ENCODE measurements at regions of chr6 and their contacts with region 1.

Region 1: DNA sequence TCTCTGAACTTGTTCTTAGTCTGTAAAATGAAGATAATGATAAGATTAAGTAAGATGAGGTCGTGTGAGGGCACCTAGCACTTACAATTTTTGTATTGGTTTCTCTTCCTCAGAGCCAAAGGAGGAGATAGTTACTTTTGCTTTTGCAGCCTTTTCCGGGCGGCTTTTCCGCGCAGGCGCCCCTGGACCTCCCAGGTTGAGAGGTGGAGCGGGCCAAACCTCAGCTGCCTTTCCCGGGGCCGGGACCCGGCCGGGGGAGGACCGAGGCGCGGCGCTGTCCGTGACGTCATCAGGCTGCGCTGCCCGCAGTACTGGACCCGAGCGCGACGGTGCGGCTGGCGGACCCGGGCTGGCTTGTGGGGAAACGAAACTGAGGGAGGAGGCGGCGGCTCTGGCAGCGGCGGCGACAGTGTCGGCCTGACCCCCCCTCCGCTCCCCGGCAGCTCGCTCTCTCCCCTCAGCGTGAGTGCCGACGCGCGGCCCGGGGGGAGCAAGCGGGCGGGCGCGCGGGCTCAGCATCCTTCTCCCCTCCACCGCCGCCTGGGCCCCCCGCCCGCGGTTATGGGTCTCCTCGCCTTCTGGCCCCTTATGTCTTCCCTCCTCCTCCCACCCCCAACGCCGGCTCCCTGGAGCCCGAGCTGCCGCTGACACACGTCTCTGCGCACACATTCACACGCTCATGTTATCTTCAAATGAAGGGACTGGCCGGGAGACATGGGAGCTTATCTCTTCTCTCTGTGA is at the start of gene CMTR1:
- DNase-seq: peak; percentile 81 to 96
- H3K4me3 ChIP-seq: peak within 1 kb of the TSS; percentile 87 to 94
- H3K27ac ChIP-seq: peak within 1 kb of the TSS; percentile 94 to 95
- H3K4me1 ChIP-seq: peaks cover 4 to 8% of the 10 kb centered on the region in 2 donors
- H3K27me3 ChIP-seq: no peaks in the 10 kb centered on the region
- CTCF ChIP-seq: no peak
- total RNA-seq, gene CMTR1: 24.5 TPM

Region 2: GRCh38 chr6:37324131-37325033 is 108.7 kb before region 1 on chr6:
- intact Hi-C with region 1: loop called (anchors 10 kb)
- DNase-seq: no peak
- H3K4me3 ChIP-seq: no peak overlapping the region
- H3K27ac ChIP-seq: peak overlapping the region; percentile 38 to 77
- H3K4me1 ChIP-seq: peaks cover 0 to 20% of the 10 kb centered on the region in 2 donors
- H3K27me3 ChIP-seq: no peaks in the 10 kb centered on the region
- CTCF ChIP-seq: no peak

Region 3: DNA sequence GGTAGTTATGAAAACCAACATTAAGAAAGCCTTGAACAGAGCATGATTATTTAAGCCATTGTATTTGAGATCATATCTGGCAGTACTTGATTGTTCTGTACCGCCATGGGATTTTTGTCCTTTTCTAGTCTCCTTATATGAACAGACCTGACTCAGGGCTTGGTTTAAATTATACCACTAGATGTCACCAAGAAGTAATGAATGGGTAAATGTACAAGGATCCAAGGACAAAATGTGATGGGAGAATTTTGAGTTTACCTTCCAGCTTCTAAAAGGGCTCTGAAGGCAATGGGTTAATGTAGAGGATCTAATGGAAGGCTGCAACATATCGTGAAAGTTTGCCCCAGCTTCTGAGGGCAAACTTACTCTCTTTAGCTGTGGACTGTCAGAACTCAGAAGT is 67.3 kb before region 1 on chr6:
- intact Hi-C with region 1: loop called (anchors 5 kb)
- DNase-seq: no peak
- H3K4me3 ChIP-seq: no peak overlapping the region
- H3K27ac ChIP-seq: peak overlapping the region; percentile 40 to 47
- H3K4me1 ChIP-seq: peaks cover 7 to 15% of the 10 kb centered on the region in 2 donors
- H3K27me3 ChIP-seq: no peaks in the 10 kb centered on the region
- CTCF ChIP-seq: peak in 2 of 3 experiments; percentile 35 to 58

Region 4: DNA sequence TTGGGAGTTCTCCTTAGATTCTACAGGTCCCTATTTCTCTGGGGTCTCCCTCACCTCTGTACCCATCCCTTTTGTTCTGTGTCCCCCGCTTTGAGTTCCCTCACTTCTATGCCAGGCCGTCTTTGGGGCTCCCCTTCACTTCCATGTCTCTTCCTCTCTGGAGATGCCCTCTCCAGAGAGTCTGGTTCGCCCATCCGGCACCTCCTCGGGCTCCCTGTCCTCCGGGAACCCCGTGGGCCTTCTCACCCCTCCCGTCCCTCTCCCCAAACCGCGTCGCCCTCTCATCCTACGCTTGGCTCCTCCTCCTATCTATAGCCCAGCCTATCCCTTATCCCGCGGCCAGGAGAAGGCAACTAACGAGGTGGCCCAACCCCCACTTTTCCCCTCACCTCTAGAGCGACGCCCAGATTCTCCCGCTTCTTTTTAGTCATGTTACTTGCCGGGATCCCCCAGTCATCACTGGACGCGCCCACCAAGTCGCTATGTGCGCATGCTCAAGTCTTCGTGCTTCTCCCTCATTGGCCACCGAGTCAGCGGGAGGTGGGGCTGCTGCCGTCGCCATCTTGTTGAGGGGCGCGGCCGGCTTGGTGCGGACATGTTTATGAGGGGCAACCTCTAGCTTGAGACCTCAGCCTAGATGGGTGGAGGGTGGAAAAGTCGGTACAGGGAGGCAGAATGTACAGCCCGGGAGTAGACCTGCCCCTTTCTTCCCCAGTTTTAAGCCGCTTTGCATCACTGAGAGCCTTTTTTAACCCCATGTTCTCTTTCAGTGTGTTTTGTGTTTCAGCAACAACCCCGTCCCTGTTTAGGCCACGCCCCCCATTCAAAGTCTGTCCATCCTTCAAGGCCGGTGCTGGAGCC is 66.6 kb after region 1 on chr6 and contains the start of gene CCDC167:
- intact Hi-C with region 1: loop called (anchors 5 kb)
- DNase-seq: peak; percentile 85 to 98
- H3K4me3 ChIP-seq: peak within 1 kb of the TSS; percentile 82 to 91
- H3K27ac ChIP-seq: peak within 1 kb of the TSS in 1 of 2 donors; percentile 23
- H3K4me1 ChIP-seq: no peaks in the 10 kb centered on the region
- H3K27me3 ChIP-seq: no peaks in the 10 kb centered on the region
- CTCF ChIP-seq: no peak
- total RNA-seq, gene CCDC167: 28.4 TPM

Region 5: DNA sequence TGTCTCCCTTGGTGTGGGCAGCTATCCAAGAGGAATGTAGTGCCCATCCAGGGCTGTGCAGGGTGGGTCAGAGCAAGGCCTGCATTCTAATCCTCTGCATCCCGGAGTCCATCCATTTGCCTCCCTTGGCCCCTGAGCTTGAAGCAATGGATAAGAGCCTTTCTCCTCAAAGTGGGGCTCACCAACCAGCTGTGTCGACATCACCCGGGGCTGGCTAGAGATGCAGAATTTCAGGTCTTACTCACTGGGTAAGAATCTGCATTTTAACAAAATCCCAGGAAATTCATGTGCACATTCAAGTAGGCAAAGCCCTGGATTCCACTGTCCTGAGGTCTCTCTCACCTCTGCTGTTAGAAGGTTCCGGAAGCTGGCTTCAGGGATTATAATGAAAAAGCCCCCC is 169.3 kb after region 1 on chr6:
- intact Hi-C with region 1: no loop called
- DNase-seq: no peak
- H3K4me3 ChIP-seq: no peak overlapping the region
- H3K27ac ChIP-seq: no peak overlapping the region
- H3K4me1 ChIP-seq: no peaks in the 10 kb centered on the region
- H3K27me3 ChIP-seq: no peaks in the 10 kb centered on the region
- CTCF ChIP-seq: no peak

Region 6: DNA sequence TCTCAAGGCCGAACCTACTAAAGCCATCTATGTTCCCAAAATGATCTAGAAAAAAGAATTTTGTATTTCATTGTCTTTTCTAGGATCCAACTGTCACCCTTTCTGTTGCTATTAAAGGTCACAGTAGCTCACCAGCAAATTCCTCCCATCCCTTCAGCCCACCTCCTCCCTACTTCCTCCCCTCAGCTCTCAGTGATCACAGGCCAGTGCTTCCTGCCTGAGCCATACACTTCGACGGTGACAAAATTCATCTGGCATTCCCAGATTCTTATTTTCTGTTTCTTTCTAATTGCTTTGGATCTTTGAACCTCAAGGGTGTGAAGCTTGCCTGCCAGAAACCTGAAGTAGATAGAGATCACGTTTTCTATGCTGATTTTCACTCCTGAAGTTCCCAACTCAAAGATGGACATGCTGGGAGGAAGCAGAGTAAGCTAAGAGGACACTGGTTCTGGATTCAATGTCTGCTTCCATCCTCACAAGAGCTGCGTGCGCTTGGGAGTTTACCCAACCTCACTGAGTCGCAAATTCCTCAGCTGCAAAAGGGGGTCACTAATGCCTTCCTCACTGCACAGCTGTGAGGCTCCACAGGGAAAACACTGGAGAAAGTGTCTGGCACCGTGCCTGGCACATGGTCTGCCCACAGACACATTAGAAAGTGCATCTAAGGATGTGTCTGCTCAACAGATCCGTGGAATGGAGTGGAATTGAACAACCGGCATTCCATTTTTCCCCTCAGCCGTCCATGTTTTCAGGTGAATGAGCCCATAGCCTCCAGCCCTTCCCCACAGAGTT is 230.1 kb after region 1 on chr6:
- intact Hi-C with region 1: no loop called
- DNase-seq: no peak
- H3K4me3 ChIP-seq: no peak overlapping the region
- H3K27ac ChIP-seq: no peak overlapping the region
- H3K4me1 ChIP-seq: no peaks in the 10 kb centered on the region
- H3K27me3 ChIP-seq: no peaks in the 10 kb centered on the region
- CTCF ChIP-seq: no peak

Measured in ascending aorta (tissue), 2 donors.